ENCODE measurements at regions of chr17 and their contacts with region 1.

Region 1: DNA sequence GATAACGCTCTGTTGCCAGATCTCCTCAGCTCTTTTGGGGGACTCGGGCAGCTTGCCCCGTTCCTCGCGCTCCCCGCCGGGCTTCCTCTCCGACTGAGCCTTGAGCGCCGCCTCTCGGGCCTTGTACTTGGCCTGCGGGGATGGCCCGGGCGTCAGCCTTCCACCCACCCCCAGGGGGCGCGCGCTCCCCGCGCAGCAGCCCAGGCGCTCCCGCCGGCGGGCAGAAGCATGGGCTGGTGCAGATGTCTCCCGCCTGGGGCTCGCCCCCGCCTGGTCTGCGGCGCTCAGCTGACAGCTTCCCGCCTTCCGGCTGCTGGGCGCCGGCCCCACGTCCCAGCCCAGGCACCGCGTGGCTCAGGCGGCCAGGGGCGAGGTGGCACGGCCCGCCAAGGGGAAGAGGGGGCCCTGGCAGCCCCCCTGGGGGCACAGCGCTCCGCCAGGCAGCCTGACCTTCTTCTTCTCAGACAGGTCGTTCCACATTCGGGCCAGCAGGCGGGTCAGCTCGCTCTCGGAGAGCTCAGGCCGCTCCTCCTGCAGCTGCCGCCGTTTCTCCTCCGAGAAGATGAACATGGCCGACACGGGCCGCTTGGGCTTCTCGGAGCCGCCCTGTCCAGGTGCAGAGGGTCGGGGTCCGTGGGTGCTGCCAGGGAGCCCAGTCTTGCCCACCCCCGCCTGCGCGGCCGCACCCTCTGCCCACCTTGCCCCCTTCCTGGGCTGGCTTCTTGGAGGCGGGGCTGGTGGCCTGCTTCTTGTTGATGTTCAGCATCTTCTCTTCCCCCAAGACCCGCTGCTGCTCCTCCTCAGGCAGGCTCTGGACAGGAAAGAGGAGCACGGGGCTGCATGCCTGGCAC is 8.9 kb downstream of the UBTF start:
- DNase-seq: peak; percentile 99
- ATAC-seq: peak; percentile 97
- H3K4me3 Mint-ChIP-seq: peak overlapping the region; percentile 76
- H3K27ac Mint-ChIP-seq: peak overlapping the region; percentile 80
- H3K4me1 Mint-ChIP-seq: peaks cover 39% of the 10 kb centered on the region
- H3K27me3 Mint-ChIP-seq: no peaks in the 10 kb centered on the region

Region 2: GRCh38 chr17:44199553-44200477 is 10.8 kb before region 1 on chr17 and contains the start of gene ATXN7L3:
- POLR2A ChIA-PET with region 1: interaction called, 20 read pairs
- DNase-seq: peak; percentile 98
- ATAC-seq: peak; percentile 71
- H3K4me3 Mint-ChIP-seq: peak within 1 kb of the TSS; percentile 95
- H3K27ac Mint-ChIP-seq: peak within 1 kb of the TSS; percentile 97
- H3K4me1 Mint-ChIP-seq: peaks cover 45% of the 10 kb centered on the region
- H3K27me3 Mint-ChIP-seq: no peaks in the 10 kb centered on the region
- total RNA-seq, gene ATXN7L3: 116 TPM

Region 3: GRCh38 chr17:44324571-44325275 is 114.2 kb after region 1 on chr17 and contains the start of gene SLC25A39:
- POLR2A ChIA-PET with region 1: interaction called, 38 read pairs
- DNase-seq: peak; percentile 100
- ATAC-seq: peak; percentile 77
- H3K4me3 Mint-ChIP-seq: peak within 1 kb of the TSS; percentile 90
- H3K27ac Mint-ChIP-seq: peak within 1 kb of the TSS; percentile 93
- H3K4me1 Mint-ChIP-seq: peaks cover 20% of the 10 kb centered on the region
- H3K27me3 Mint-ChIP-seq: no peaks in the 10 kb centered on the region
- total RNA-seq, gene SLC25A39: 104 to 117 TPM

Region 4: DNA sequence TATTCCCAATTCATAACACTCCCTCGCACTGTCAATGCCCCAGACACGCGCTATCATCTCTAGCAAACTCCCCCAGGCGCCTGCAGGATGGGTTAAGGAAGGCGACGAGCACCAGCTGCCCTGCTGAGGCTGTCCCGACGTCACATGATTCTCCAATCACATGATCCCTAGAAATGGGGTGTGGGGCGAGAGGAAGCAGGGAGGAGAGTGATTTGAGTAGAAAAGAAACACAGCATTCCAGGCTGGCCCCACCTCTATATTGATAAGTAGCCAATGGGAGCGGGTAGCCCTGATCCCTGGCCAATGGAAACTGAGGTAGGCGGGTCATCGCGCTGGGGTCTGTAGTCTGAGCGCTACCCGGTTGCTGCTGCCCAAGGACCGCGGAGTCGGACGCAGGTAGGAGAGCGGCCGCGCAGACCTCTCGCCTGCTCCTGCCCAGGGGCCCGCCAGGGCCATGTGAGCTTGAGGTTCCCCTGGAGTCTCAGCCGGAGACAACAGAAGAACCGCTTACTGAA is 134.4 kb after region 1 on chr17 and contains the start of gene GRN:
- POLR2A ChIA-PET with region 1: interaction called, 15 read pairs
- DNase-seq: peak; percentile 79
- ATAC-seq: peak; percentile 99
- H3K4me3 Mint-ChIP-seq: peak within 1 kb of the TSS; percentile 93
- H3K27ac Mint-ChIP-seq: peak within 1 kb of the TSS; percentile 79
- H3K4me1 Mint-ChIP-seq: peaks cover 23% of the 10 kb centered on the region
- H3K27me3 Mint-ChIP-seq: peaks cover 19% of the 10 kb centered on the region
- total RNA-seq, gene GRN: 53.5 to 58.8 TPM